ENCODE measurements at regions of chr6 and their contacts with region 1.

Region 1: GRCh38 chr6:150813319-150813992 is 52.0 kb upstream of the MTHFD1L start:
- DNase-seq: no peak
- H3K4me3 ChIP-seq: no peak overlapping the region
- H3K27ac ChIP-seq: peak overlapping the region; percentile 12
- H3K4me1 ChIP-seq: peaks cover 10% of the 10 kb centered on the region
- H3K27me3 ChIP-seq: no peaks in the 10 kb centered on the region
- CTCF ChIP-seq: no peak
- POLR2A ChIP-seq: no peak

Region 2: DNA sequence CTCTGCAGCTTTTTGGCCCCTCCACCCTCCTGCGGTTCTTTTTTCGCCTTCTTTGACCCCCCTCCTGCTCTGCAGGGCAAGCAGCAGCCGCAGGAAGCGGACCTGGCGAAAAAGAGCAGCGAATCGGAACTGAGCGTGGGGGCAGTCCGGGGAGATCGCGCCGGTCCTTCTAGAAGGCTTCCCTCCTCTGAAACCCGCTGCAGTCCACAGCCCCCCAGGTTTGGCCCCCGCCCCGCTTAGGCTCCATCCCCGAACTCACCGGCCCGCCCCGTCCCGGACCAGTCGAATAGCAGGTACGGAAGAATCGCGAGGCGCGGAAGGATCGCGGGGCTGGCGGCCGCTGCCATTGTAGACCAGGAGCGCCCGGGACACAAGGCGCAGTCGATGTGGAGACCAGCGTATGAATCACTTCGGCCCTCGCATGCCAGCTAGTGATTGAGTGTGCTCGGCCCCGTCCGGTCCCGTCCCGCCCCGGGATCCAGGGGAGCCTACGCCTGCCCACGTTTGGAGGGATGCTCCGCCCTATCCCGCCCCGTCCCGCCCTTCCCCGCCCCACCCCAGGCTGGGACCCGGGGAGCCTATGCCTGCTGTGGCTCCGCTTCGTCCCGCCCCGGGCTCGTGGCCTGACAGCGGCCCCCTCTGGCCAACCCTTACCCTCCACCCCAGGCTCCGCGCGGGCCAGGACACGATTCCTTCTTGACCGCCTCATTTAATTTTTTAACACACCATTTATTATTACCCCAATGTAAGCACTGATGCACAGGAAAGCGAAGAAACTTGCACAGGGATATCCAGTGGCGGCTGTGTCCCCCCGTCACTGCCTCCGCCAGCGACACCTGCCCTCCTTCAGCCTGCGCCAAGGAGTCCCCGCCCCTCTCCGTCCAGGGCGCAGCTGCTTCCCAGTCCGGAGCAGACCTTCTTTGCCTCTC is 744.5 kb before region 1 on chr6 and contains the start of gene ULBP3:
- CTCF ChIA-PET with region 1: interaction called, 19 read pairs
- POLR2A ChIA-PET with region 1: no interaction called
- dilution Hi-C with region 1: no loop called
- intact Hi-C with region 1: loop called (anchors 2 kb)
- DNase-seq: peak; percentile 97
- H3K4me3 ChIP-seq: peak within 1 kb of the TSS; percentile 72 to 88 (median 85)
- H3K27ac ChIP-seq: peak within 1 kb of the TSS; percentile 54
- H3K4me1 ChIP-seq: peaks cover 4% of the 10 kb centered on the region
- H3K27me3 ChIP-seq: peaks cover 0 to under 1% of the 10 kb centered on the region in 2 experiments
- CTCF ChIP-seq: peak; percentile 42 to 75
- POLR2A ChIP-seq: peak; percentile 92
- total RNA-seq, gene ULBP3: 12.8 and 13.8 TPM in 2 replicates

Region 3: GRCh38 chr6:150334790-150335783 is 478.4 kb before region 1 on chr6:
- CTCF ChIA-PET with region 1: interaction called, 18 read pairs
- POLR2A ChIA-PET with region 1: no interaction called
- dilution Hi-C with region 1: no loop called
- intact Hi-C with region 1: loop called (anchors 1 kb)
- DNase-seq: peak; percentile 65
- H3K4me3 ChIP-seq: no peak overlapping the region
- H3K27ac ChIP-seq: no peak overlapping the region
- H3K4me1 ChIP-seq: no peaks in the 10 kb centered on the region
- H3K27me3 ChIP-seq: peaks cover 3 to 12% of the 10 kb centered on the region in 2 experiments
- CTCF ChIP-seq: peak; percentile 61 to 62
- POLR2A ChIP-seq: no peak

Region 4: DNA sequence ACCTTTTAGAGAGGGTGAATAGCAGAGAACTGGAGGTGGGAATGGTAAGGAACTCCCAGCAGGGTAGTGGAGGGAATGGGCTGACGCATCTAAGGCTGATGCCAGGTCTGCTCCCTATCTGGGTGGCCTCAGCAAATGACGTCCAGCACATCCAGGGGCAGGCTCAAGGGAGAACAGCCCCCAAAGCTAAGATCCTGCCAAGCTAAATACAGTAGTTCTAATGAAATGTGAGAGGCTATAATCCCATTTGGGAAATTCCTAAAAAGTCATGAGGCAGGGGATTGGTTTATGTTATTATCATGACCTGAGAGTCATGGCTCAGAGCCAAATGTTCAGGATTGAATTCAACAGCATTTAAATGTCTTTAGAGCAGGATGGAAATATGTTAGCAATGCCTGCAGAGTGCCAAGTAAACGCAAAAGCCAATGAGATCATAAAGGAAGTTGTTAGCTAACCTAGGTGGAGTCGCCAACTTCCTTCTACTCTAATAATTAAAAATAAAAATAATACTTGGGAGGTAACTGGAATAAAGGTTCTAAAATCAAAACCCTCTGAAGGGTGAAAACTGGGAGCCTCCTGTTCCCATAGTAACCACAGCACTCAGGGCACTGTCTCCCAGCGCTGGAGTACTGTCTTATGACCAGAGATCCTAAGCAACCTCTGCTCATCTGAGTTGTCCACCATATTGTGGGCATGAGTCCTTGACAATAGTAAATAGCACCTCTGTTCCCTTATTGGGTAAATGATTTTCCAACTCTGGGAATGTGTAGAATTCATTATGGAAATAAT is 409.8 kb before region 1 on chr6:
- CTCF ChIA-PET with region 1: interaction called, 11 read pairs
- POLR2A ChIA-PET with region 1: no interaction called
- dilution Hi-C with region 1: no loop called
- intact Hi-C with region 1: no loop called
- DNase-seq: peak; percentile 92
- H3K4me3 ChIP-seq: no peak overlapping the region
- H3K27ac ChIP-seq: no peak overlapping the region
- H3K4me1 ChIP-seq: peaks cover 9% of the 10 kb centered on the region
- H3K27me3 ChIP-seq: peaks cover 26 to 27% of the 10 kb centered on the region in 2 experiments
- CTCF ChIP-seq: no peak
- POLR2A ChIP-seq: no peak

Region 5: GRCh38 chr6:150600301-150601017 is 213.0 kb before region 1 on chr6:
- CTCF ChIA-PET with region 1: interaction called, 21 read pairs
- POLR2A ChIA-PET with region 1: no interaction called
- dilution Hi-C with region 1: no loop called
- intact Hi-C with region 1: loop called (anchors 1 kb)
- DNase-seq: peak; percentile 76
- H3K4me3 ChIP-seq: peak overlapping the region; percentile 68 to 80 (median 70)
- H3K27ac ChIP-seq: peak overlapping the region; percentile 35
- H3K4me1 ChIP-seq: peaks cover 8% of the 10 kb centered on the region
- H3K27me3 ChIP-seq: peaks cover 21 to 31% of the 10 kb centered on the region in 2 experiments
- CTCF ChIP-seq: peak; percentile 43 to 61
- POLR2A ChIP-seq: no peak

Region 6: DNA sequence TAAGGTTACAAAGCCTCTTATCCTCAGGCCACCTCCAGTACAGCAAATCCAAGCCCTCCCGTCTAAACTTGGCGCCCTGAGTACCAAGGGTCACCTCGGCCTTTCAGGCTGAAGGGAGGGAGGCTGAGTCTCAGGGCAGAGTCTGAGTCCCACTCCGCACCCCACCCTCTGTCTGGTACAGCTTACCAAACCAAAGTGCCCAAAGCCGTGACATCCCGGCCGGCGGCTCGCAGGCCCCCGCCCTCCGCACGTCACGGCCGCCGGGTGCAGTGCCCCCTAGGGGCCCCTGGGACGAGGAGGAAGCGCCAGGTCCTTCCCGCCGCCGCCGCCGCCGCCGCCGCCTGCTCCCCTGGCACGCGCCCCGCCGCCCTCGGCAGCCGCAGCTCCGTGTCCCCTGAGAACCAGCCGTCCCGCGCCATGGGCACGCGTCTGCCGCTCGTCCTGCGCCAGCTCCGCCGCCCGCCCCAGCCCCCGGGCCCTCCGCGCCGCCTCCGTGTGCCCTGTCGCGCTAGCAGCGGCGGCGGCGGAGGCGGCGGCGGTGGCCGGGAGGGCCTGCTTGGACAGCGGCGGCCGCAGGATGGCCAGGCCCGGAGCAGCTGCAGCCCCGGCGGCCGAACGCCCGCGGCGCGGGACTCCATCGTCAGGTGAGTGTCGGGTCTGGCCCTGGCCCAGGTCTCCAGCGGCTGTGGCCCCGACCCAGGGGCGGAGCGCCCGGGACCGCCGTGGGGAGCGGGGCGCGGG is 52.1 kb after region 1 on chr6 and contains the start of gene MTHFD1L:
- CTCF ChIA-PET with region 1: interaction called, 29 read pairs
- POLR2A ChIA-PET with region 1: interaction called, 4 read pairs
- dilution Hi-C with region 1: no loop called
- intact Hi-C with region 1: loop called (anchors 1 kb)
- DNase-seq: peak; percentile 86
- H3K4me3 ChIP-seq: peak within 1 kb of the TSS; percentile 90 to 93 (median 92)
- H3K27ac ChIP-seq: peak within 1 kb of the TSS; percentile 93
- H3K4me1 ChIP-seq: peaks cover 25% of the 10 kb centered on the region
- H3K27me3 ChIP-seq: no peaks in the 10 kb centered on the region
- CTCF ChIP-seq: peak; percentile 58 to 62
- POLR2A ChIP-seq: peak; percentile 60
- total RNA-seq, gene MTHFD1L: 120 and 121 TPM in 2 replicates

Region 7: DNA sequence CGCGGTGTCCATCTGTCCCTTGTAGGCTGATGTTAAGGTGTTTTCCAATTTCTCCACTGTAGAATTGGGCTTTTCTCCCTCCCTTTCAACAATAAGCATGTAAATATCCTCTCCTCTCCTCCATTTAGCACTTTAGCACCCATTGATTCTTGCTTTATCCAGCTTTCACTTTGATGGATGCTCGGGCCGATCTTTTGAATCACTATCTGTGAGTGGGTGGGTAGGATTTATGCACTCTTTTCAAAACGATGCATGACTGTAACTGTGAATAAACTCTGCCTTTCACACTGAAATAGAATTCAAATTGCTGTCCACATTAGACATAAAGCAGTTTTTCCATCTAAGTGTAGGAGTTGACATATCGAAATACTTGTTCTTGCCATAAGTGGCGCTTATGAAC is 525.4 kb after region 1 on chr6:
- CTCF ChIA-PET with region 1: interaction called, 43 read pairs
- POLR2A ChIA-PET with region 1: no interaction called
- dilution Hi-C with region 1: no loop called
- intact Hi-C with region 1: loop called (anchors 2 kb)
- DNase-seq: no peak
- H3K4me3 ChIP-seq: no peak overlapping the region
- H3K27ac ChIP-seq: no peak overlapping the region
- H3K4me1 ChIP-seq: no peaks in the 10 kb centered on the region
- H3K27me3 ChIP-seq: no peaks in the 10 kb centered on the region
- CTCF ChIP-seq: no peak
- POLR2A ChIP-seq: no peak

Measured in endothelial cell of umbilical vein (primary cell).